Left colon (tissue), 2 donors: ENCODE measurements at regions of chr2 and their contacts with region 1.

Region 1: DNA sequence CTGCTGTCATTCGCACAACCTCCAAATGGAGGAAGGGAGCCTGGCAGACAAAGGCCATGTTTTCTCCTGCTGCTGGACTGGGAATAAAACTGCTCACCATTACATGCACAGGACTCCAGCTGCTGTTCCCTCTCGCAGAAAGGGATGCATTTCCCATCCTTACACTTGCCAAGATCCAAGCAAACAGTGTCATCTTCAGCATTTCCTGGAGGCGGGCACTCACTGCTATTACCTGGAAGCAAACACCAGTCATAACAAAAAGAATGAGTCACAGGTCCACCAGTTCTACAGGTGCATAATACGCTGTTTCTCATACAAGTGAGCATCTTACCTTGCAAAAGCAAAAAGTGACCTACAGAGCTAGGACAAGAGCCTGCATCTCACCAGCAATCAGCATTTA is 22.7 kb downstream of the IAH1 start:
- DNase-seq: no peak
- ATAC-seq: peak; percentile 92

Region 2: DNA sequence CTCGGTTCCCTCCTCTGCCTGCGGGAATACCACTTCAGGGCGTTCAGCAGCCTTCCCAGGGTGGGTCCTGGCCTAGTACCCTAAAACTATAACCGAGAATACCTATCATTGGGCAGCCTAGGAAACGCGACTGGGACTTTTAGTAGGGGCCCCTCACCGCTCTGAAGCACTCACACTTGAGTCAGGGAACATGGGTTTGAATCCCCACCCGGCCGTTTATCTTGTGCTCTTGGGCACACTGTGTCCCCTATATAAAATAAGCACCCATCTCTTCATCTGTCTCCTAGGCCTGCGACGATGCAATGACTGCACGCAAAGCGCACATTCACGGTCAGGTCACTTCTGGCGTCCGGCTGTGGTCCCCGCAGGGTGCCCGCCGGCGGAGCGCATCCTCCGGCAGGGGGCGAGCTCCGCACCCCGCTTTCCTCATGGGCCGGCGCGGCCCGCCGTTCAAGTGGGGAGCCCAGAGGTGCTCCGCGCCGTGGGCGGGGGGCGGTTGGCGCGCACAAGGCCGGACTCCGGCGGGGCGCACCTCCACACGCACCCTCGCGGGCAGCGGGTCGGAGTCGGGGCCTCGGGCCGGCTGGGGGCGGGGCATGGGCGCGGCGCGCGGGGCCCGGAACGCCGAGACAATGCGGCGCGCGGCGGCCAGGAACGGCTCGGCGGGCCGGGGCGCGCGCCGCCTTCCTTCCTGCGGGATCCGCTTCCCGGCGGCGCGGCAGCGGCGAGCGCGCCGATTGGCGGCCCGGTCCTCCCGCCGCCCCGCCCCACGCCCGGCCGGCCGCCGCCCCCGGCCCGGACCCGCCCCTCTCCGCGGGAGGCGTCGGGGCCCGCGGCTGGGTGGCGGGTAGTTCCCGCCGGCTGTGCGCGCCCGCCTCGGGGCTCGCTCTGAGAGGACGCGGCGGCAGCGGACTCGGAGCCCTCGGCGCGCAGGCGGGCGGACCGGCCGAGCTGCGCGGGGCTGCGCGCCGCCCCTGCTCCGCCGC is 290.8 kb before region 1 on chr2 and contains the start of gene ASAP2:
- intact Hi-C with region 1: no loop called
- DNase-seq: peak; percentile 62 to 81
- ATAC-seq: peak; percentile 62
- total RNA-seq, gene ASAP2: 63.8 to 71.0 TPM

Region 3: DNA sequence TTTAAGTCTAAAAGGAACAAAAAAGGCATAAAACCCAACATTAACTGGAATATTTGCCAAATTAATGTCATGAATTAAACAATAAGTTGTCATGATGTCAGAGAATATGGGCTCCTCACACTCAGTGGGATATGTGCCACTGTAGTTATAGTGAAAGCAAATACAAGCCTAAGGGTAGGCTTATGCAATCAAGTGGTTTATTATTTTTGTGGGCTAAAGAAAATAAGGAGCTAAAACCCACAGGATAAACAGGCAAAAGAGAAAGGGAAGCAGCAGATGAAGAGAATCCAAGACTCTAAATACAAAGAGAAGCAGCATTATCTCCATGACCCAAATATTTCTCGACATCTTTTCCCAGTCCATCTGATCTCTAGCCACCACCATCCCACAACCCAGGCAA is 116.3 kb after region 1 on chr2:
- intact Hi-C with region 1: loop called in 1 of 2 experiments (anchors 10 kb)
- DNase-seq: no peak
- ATAC-seq: no peak